Esophagus muscularis mucosa (tissue), 4 donors: ENCODE measurements at regions of chr7 and their contacts with region 1.

Region 1: DNA sequence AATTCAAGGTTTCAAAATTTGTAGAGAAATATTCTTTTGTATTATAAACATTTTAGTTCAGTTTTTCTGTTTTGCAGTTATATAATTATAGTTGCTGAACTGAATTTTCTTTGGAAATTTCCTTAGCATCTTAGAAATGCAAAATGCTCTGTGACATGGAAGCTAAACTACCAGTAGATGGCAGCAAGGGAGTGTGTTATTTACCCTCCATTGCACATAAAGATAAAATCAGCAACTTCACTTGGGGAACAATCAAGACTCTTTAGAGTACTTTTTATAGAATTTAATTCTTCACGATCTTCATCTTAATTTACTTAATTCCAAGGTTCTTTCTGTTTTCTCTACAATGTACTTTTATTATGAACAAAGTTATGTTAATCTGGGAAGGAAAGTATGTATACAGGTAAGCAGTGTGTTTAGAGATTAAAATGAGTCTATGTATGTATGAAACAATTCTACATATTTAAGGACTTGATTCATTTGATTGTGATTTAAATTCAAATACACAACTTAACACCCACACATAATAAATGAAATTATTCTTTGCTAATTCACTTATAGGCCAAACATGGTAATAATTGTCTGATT is 404.2 kb downstream of the THSD7A start:
- DNase-seq: no peak
- H3K4me3 ChIP-seq: no peak overlapping the region
- H3K27ac ChIP-seq: no peak overlapping the region
- H3K4me1 ChIP-seq: no peaks in the 10 kb centered on the region
- H3K27me3 ChIP-seq: no peaks in the 10 kb centered on the region
- CTCF ChIP-seq: peak; percentile 65 to 75 (median 68)
- EP300 ChIP-seq: no peak
- POLR2A ChIP-seq: no peak

Region 2: DNA sequence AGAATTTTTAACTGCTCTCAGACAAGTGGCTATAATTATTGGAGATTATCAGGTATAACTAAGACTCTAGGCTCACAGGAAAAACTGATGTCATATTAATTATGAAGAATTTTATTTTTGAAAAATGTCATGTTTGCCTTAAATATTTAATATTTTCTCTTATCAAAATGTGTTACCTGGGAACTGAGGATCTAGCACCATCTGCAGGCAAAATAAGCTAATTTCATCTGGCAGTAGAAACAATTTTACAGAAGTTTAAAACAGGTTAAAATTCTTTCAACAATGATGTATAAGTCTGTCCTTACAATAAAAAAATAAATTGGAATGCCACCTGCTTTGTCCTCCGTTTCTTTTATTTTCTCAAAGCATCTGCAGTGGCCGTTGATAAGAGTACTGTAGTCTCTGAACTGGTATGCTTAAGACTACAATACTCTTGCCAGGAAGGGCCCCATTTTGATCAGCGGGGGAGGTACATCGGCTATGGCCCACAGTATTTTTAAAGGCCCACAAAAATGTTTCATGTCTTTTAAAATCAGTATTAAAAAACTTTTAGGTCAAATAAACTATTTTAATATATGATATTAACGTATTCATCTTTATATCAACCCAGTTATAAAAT is 894.6 kb after region 1 on chr7:
- intact Hi-C with region 1: loop called (anchors 5 kb)
- DNase-seq: no peak
- H3K4me3 ChIP-seq: no peak overlapping the region
- H3K27ac ChIP-seq: no peak overlapping the region
- H3K4me1 ChIP-seq: no peaks in the 10 kb centered on the region
- H3K27me3 ChIP-seq: no peaks in the 10 kb centered on the region
- CTCF ChIP-seq: peak; percentile 43 to 60 (median 57)
- EP300 ChIP-seq: no peak
- POLR2A ChIP-seq: no peak

Region 3: GRCh38 chr7:12490117-12490688 is 1062.4 kb after region 1 on chr7:
- intact Hi-C with region 1: loop called (anchors 5 kb)
- DNase-seq: no peak
- H3K4me3 ChIP-seq: no peak overlapping the region
- H3K27ac ChIP-seq: no peak overlapping the region
- H3K4me1 ChIP-seq: no peaks in the 10 kb centered on the region
- H3K27me3 ChIP-seq: no peaks in the 10 kb centered on the region
- CTCF ChIP-seq: peak; percentile 22 to 41 (median 33)
- EP300 ChIP-seq: no peak
- POLR2A ChIP-seq: no peak